RWPE1 (cell line): ENCODE measurements at regions of chr1 and their contacts with region 1.

Region 1: DNA sequence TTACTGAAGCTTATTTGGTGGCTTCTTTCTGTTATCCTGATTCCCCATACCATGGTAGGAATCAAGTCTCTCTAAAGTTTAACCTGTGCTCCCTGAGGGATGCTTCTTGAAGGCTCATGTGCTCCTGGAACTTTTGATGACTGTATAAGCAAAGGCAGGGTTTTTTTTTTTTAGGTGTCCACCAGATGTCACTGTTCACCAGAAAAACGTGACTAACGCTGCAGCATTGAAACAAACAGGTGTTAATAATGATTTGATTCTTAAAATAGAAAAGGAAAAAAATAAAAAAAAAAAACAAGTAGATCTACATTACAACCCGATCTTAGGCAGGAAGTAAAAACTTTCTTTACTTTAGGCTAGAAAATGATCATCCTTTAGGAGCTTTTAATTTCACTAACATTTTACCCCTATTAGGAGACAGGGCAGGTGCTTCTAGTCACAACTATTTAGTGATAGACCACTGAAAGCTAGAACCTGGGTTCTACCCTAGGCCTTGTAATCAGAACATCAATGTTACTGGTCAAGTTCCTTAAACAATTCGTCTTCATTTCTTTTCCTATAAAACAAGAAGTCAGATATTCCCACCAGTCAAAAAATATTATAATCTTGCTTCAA is 223.0 kb downstream of the PLA2G4A start:
- DNase-seq: peak; percentile 31
- H3K27ac ChIP-seq: no peak overlapping the region
- CTCF ChIP-seq: peak; percentile 45

Region 2: DNA sequence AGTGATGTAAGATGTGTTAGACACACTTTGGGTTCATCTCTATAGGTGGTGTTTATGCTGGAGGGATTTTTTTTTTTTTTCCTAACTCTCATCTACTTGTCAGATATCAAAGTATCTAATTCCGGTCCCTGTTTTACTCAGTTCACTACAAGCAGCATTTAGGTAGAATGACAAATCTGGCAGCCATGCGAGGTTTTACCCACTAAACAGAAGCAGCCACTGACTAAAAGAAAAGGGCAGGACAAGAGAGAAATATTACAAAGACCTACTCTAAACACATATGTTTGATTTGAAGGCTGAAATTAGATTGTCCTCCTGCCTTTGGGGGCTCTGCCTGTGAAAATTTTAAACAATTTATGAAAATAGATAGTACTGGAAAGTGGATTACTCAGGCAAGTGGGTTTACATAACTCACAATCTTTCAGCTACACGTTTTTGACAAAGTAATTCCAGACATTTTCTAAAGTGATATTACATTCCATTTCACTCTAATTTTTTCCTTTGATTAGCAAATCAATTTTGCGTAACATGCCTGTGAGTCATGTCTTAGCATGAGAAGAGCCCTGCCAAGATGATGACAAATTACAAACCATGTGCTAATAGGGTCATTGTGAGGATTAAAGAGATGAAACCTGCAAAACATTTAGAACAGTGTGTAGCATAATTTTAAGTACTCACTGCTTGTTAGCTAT is 50.4 kb before region 1 on chr1:
- CTCF ChIA-PET with region 1: no interaction called
- POLR2A ChIA-PET with region 1: no interaction called
- DNase-seq: peak; percentile 76
- H3K27ac ChIP-seq: no peak overlapping the region
- CTCF ChIP-seq: no peak

Region 3: GRCh38 chr1:187067160-187067559 is 15.4 kb after region 1 on chr1:
- CTCF ChIA-PET with region 1: interaction called, 12 read pairs
- POLR2A ChIA-PET with region 1: no interaction called
- DNase-seq: no peak
- H3K27ac ChIP-seq: no peak overlapping the region
- CTCF ChIP-seq: no peak